Activated CD8-positive, alpha-beta T cell treated with anti-CD3 and anti-CD28 coated beads for 36 hours (primary cell): ENCODE measurements at regions of chr1 and their contacts with region 1.

Region 1: GRCh38 chr1:54944610-54945544 is 35.6 kb upstream of the TMEM61 start:
- DNase-seq: peak; percentile 85
- ATAC-seq: peak; percentile 86
- H3K4me3 Mint-ChIP-seq: no peak overlapping the region
- H3K27ac Mint-ChIP-seq: no peak overlapping the region
- H3K4me1 Mint-ChIP-seq: peaks cover 6% of the 10 kb centered on the region
- H3K27me3 Mint-ChIP-seq: no peaks in the 10 kb centered on the region
- CTCF ChIP-seq: peak; percentile 67

Region 2: GRCh38 chr1:54934869-54935268 is 10.0 kb before region 1 on chr1:
- CTCF ChIA-PET with region 1: interaction called, 25 read pairs
- POLR2A ChIA-PET with region 1: interaction called, 3 read pairs
- intact Hi-C with region 1: no loop called
- DNase-seq: no peak
- ATAC-seq: no peak
- H3K4me3 Mint-ChIP-seq: no peak overlapping the region
- H3K27ac Mint-ChIP-seq: no peak overlapping the region
- H3K4me1 Mint-ChIP-seq: peaks cover 11% of the 10 kb centered on the region
- H3K27me3 Mint-ChIP-seq: peaks cover 3% of the 10 kb centered on the region
- CTCF ChIP-seq: no peak

Region 3: DNA sequence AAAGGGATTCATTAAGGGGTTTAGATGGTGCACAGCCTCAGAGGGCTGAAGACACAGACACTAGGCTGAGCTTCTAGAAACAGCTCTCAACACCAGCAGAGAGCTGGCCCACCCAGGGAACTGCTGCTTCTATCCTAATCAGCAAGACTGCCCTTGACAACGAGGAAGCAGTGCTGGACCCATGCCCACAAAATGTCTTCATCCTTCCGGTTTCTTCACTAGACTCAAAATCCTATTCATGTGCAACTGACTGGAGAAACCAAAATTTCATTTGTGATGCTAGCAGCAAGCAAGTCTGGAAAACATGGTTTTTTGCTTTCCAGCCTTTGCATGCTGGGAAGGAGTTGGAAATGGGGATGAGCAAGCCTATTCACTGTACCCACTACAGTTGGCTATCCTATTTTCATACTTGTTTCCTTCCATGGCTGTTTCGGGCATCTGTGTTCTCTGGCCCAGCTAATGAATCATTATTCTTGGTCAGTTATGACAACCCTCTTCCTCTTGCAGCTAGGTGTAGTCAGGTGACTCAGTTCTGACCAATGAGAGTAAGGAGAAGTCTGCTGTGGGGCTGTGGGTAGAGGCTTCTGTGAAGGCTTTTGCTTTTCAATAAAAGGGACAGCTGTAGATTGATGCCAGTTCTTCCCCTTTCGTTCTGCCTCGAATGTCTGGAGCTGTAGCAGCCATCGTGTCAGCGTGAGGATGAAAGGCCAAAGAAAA is 20.9 kb after region 1 on chr1:
- CTCF ChIA-PET with region 1: interaction called, 24 read pairs
- POLR2A ChIA-PET with region 1: no interaction called
- intact Hi-C with region 1: no loop called
- DNase-seq: peak; percentile 10
- ATAC-seq: peak; percentile 58
- H3K4me3 Mint-ChIP-seq: no peak overlapping the region
- H3K27ac Mint-ChIP-seq: no peak overlapping the region
- H3K4me1 Mint-ChIP-seq: peaks cover 5% of the 10 kb centered on the region
- H3K27me3 Mint-ChIP-seq: peaks cover 13% of the 10 kb centered on the region
- CTCF ChIP-seq: no peak

Region 4: GRCh38 chr1:54987919-54988705 is 43.2 kb after region 1 on chr1:
- CTCF ChIA-PET with region 1: interaction called, 22 read pairs
- POLR2A ChIA-PET with region 1: no interaction called
- intact Hi-C with region 1: no loop called
- DNase-seq: no peak
- ATAC-seq: no peak
- H3K4me3 Mint-ChIP-seq: no peak overlapping the region
- H3K27ac Mint-ChIP-seq: no peak overlapping the region
- H3K4me1 Mint-ChIP-seq: no peaks in the 10 kb centered on the region
- H3K27me3 Mint-ChIP-seq: no peaks in the 10 kb centered on the region
- CTCF ChIP-seq: no peak

Region 5: DNA sequence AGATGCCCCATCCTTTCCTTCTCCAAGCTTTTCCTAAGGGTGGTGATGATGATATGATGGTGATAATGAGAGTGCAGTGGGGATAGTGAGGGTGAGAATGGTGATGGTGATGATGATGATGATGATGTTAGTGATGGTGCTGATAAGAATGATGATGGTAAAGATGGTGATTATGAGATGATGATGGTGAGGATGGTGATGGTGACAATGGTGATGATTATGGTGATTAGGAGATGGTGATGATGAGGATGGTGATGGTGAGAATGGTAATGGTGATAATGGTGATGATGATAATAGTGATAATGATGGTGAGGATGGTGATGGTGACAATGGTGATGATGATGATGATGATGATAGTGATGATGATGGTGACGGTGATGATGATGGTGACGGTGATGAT is 57.8 kb after region 1 on chr1:
- CTCF ChIA-PET with region 1: interaction called, 64 read pairs
- POLR2A ChIA-PET with region 1: no interaction called
- intact Hi-C with region 1: loop called (anchors 2 kb)
- DNase-seq: no peak
- ATAC-seq: no peak
- H3K4me3 Mint-ChIP-seq: no peak overlapping the region
- H3K27ac Mint-ChIP-seq: no peak overlapping the region
- H3K4me1 Mint-ChIP-seq: no peaks in the 10 kb centered on the region
- H3K27me3 Mint-ChIP-seq: peaks cover 14% of the 10 kb centered on the region
- CTCF ChIP-seq: no peak